ENCODE measurements at regions of chr3 and their contacts with region 1.

Region 1: DNA sequence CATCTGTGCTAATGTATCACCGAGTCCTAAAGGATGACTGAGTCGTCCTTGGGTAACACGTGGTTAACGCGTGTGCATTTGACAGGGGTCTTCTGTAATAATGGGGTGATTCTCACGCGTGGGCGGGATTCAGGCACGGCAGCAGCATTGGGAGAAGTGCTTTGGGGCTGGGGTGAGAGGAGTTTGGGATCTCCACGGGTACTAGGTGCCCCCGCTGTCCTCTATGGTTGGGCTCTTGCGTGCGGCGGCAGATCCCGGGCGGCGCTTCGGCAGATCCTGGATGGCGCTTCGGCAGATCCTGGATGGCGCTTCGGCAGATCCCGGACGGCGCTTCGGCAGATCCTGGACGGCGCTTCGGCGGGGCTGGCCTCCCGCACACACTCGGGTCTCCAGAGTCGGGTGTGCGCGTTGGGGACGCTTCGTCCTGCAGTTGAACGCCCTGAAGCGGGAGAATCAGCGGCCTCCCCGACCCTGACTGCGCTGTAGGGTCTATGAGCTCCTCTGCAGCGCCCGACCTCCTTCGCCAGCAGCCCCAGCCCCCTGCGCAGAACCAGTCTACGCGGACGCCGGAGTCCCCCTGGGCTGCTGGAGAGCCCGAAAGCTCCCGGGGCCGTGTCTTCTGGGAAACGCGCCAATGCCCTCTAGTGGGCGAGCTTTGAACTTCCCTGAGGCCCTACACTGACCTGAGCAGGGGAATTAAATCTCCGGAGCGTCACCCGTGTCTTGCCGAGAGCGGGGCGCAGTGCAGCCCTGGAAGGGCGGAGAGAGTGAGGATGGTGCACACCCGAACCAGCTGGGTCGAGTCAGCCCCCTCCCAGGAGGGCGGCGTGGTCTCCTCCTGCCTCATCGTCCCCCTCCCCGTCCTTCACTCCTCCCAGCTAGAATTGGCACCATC is 48.1 kb upstream of the EPHB3 start:
- DNase-seq: peak; percentile 55 to 84
- ATAC-seq: peak; percentile 96 to 100
- H3K4me3 ChIP-seq: peak overlapping the region; percentile 37
- H3K27ac ChIP-seq: no peak overlapping the region
- H3K4me1 ChIP-seq: no peaks in the 10 kb centered on the region
- CTCF ChIP-seq: peak; percentile 56
- EP300 ChIP-seq: no peak
- POLR2A ChIP-seq: no peak
- RAD21 ChIP-seq: peak; percentile 67 to 71

Region 2: GRCh38 chr3:184371570-184372018 is 141.9 kb before region 1 on chr3:
- CTCF ChIA-PET with region 1: interaction called, 98 read pairs
- POLR2A ChIA-PET with region 1: interaction called, 3 read pairs
- DNase-seq: peak; percentile 82 to 83
- ATAC-seq: peak; percentile 94 to 96
- H3K4me3 ChIP-seq: no peak overlapping the region
- H3K27ac ChIP-seq: no peak overlapping the region
- H3K4me1 ChIP-seq: peaks cover 8% of the 10 kb centered on the region; the same call in 2 of the 3 replicates
- CTCF ChIP-seq: peak; percentile 75
- EP300 ChIP-seq: no peak
- POLR2A ChIP-seq: no peak
- RAD21 ChIP-seq: peak; percentile 87 to 93

Region 3: GRCh38 chr3:184417619-184418327 is 95.8 kb before region 1 on chr3:
- CTCF ChIA-PET with region 1: interaction called, 132 read pairs
- POLR2A ChIA-PET with region 1: no interaction called
- DNase-seq: peak; percentile 44 to 64
- ATAC-seq: peak; percentile 95 to 99
- H3K4me3 ChIP-seq: no peak overlapping the region
- H3K27ac ChIP-seq: no peak overlapping the region
- H3K4me1 ChIP-seq: no peaks in the 10 kb centered on the region
- CTCF ChIP-seq: peak; percentile 65
- EP300 ChIP-seq: no peak
- POLR2A ChIP-seq: no peak
- RAD21 ChIP-seq: peak; percentile 73 to 81

Region 4: DNA sequence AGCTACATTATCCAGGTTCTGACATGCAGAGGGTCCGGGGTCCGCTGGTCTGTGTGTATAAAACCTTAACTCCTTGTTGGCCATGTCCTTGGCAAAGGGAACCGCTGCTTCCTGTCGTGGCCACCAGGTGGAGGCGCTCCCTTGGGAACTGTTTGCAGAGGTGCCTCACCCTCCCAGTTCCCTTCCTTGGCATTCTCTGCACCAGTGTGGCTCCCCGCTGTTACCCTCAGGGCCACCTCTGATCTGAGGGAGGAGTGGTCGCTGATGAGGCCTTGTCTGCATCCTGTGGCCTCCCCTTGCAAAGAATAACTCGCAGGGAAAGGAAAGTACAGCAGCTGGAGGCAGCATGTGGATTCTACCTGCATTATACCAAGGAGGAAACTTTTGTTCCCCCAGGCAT is 44.1 kb before region 1 on chr3:
- CTCF ChIA-PET with region 1: interaction called, 51 read pairs
- POLR2A ChIA-PET with region 1: no interaction called
- DNase-seq: peak; percentile 37 to 41
- ATAC-seq: peak; percentile 77 to 89
- H3K4me3 ChIP-seq: no peak overlapping the region
- H3K27ac ChIP-seq: no peak overlapping the region
- H3K4me1 ChIP-seq: no peaks in the 10 kb centered on the region
- CTCF ChIP-seq: peak; percentile 48
- EP300 ChIP-seq: no peak
- POLR2A ChIP-seq: no peak
- RAD21 ChIP-seq: peak; percentile 47 to 55; a peak in 4 of 5 replicates

Region 5: GRCh38 chr3:184481984-184482671 is 31.4 kb before region 1 on chr3:
- CTCF ChIA-PET with region 1: interaction called, 17 read pairs
- POLR2A ChIA-PET with region 1: no interaction called
- DNase-seq: no peak
- ATAC-seq: no peak
- H3K4me3 ChIP-seq: no peak overlapping the region
- H3K27ac ChIP-seq: no peak overlapping the region
- H3K4me1 ChIP-seq: no peaks in the 10 kb centered on the region
- CTCF ChIP-seq: no peak
- EP300 ChIP-seq: no peak
- POLR2A ChIP-seq: no peak
- RAD21 ChIP-seq: no peak

Region 6: DNA sequence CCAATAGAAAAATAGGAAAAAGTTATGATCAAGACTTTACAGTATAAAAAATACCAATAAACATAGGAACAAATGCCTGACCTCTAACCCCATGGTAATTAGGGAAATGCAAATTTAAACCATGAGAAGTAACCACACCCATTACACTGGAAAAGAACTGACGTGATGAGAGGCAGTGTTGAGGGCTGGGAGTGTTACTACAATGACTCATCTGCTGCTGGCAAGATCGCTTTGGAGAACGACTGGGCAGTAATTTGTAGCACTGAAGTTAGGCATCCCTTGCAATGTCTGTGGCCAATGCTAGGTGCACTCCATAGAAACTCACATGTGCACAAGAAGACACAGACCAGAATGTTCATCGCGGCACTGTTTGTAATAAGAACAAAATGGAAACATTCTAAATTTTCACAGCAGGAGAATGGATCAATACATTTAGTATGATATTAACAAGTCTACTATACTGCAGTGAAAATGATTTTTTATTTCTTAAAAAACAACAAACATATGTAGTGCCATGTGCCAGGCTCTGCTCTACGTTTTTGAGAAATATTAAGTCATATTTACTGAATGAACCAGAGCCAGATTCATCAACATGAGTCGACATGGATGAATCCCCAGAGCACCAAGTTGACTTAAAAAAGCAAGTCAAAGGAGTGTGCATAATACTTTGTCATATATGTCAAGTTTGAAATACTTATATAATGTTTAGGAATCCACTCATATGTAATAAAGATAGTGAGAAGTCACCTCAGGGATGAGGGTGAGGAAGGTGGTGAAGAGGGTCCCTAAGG is 10.5 kb after region 1 on chr3:
- CTCF ChIA-PET with region 1: interaction called, 51 read pairs
- POLR2A ChIA-PET with region 1: no interaction called
- DNase-seq: peak; percentile 28 to 31
- ATAC-seq: peak; percentile 66 to 84; a peak in 4 of 6 replicates
- H3K4me3 ChIP-seq: no peak overlapping the region
- H3K27ac ChIP-seq: no peak overlapping the region
- H3K4me1 ChIP-seq: no peaks in the 10 kb centered on the region
- CTCF ChIP-seq: no peak
- EP300 ChIP-seq: no peak
- POLR2A ChIP-seq: no peak
- RAD21 ChIP-seq: no peak